Calu3 (cell line): ENCODE measurements at regions of chr21 and their contacts with region 1.

Region 1: DNA sequence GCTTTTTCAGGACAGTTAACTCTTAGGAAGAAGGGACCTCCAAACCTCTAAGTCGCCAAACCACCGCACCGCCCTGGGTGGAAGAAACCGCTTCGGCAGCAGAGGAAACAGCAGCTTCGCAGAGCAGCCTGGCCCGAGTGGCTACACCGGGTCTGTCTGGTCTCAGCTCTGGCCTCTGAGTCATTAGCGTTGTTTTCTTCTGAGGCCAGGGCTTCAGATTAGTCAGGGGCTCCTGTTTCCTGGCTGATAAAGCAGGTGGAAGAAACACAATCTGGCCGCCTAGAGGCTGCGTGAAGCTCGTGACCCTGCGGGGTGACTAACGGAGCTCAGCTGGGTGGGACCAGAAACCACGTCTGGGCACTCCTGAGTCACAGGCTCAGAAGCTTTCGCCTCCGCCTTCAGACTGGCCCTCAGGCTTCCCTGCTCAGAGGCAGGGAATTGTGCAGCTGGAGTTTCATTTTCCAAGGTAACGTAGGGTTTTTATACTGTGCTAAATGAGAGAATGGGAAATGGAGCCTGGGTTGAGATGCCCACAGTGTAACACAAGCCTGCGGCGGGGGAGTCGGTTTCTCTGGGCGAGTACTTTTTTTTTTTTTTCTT is 44.9 kb downstream of the CHAF1B start:
- DNase-seq: peak; percentile 88
- H3K4me3 Mint-ChIP-seq: peak overlapping the region; percentile 74
- H3K27ac Mint-ChIP-seq: peak overlapping the region; percentile 89
- H3K4me1 Mint-ChIP-seq: peaks cover 17% of the 10 kb centered on the region
- H3K27me3 Mint-ChIP-seq: no peaks in the 10 kb centered on the region
- CTCF ChIP-seq: no peak

Region 2: GRCh38 chr21:36125512-36126222 is 304.4 kb before region 1 on chr21:
- CTCF ChIA-PET with region 1: no interaction called
- intact Hi-C with region 1: no loop called
- DNase-seq: peak; percentile 36
- H3K4me3 Mint-ChIP-seq: no peak overlapping the region
- H3K27ac Mint-ChIP-seq: no peak overlapping the region
- H3K4me1 Mint-ChIP-seq: peaks cover 10% of the 10 kb centered on the region
- H3K27me3 Mint-ChIP-seq: no peaks in the 10 kb centered on the region
- CTCF ChIP-seq: peak; percentile 52

Region 3: DNA sequence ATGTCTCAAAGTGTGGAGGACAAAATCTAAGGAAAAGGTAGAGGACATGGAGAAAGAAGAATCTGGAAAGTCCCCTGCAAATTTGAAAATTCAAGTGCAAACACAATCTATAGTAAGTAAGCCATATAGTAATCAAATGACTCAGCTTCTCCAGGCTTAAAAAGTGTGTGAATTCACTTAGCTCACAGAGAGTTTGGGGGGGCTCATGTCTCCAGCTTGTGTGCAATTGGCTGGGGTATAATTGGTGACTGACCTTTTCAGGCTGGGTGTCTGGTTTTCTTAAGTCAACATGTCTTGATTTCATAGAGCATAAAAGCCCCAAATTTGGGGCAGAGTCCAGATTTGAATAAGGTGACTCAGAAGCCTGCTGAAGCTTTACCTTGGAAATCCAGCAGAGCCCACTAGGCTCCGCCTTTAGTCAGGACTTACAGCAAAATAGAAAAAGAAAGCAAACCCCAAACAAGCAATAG is 41.2 kb after region 1 on chr21:
- CTCF ChIA-PET with region 1: no interaction called
- intact Hi-C with region 1: loop called (anchors 5 kb)
- DNase-seq: peak; percentile 9
- H3K4me3 Mint-ChIP-seq: no peak overlapping the region
- H3K27ac Mint-ChIP-seq: no peak overlapping the region
- H3K4me1 Mint-ChIP-seq: peaks cover 15% of the 10 kb centered on the region
- H3K27me3 Mint-ChIP-seq: no peaks in the 10 kb centered on the region
- CTCF ChIP-seq: no peak